Naive thymus-derived CD4-positive, alpha-beta T cell (primary cell): ENCODE measurements at regions of chr19 and their contacts with region 1.

Region 1: DNA sequence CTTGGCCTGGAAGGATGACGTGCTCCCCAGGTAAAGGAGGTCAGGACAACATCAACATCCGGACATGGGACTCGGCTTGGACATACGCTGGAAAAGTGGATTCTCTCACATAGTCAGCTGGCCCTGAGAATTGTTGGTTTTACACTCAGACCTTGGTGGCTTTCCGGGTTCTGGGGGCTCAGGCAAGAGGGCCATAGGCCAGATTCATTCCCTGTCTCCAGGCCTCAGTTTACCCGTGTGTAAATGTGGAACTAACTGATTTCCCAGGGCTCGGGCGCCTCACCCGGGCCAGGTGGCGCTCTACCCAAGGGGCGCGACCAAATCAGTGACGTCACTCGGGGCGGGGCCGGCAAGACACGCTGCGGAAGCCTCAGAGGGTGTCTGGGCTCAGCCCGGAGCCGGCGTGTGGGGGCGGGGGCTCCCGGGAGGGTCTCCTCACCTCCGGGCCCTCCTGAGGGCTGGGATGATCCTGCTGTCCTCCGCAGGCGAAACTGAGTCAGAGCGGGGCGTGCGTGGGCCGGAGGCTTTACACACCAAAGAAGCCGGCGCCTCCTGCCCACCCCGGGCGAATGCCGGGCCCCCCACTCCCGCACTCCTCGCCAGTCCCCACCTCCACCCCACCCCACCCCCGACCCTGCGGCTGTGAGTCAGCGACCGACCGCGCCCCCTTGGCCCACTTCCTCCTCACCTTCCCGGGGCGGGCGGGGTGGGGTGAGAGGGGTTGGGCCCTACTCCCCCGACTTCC is 861 bp upstream of the VASP start:
- DNase-seq: peak; percentile 95 to 99 (median 98)
- ATAC-seq: peak; percentile 88
- H3K4me3 ChIP-seq: peak overlapping the region; percentile 99
- H3K4me3 Mint-ChIP-seq: peak overlapping the region; percentile 91 to 96 (median 94)
- H3K27ac ChIP-seq: peak overlapping the region; percentile 87
- H3K27ac Mint-ChIP-seq: peak overlapping the region; percentile 91 to 98 (median 97)
- H3K4me1 ChIP-seq: peaks cover 14 to 20% of the 10 kb centered on the region in 2 donors
- H3K4me1 Mint-ChIP-seq: peaks cover 29 to 46% (median 34%) of the 10 kb centered on the region in 7 donors
- H3K27me3 ChIP-seq: no peaks in the 10 kb centered on the region
- H3K27me3 Mint-ChIP-seq: no peaks in the 10 kb centered on the region

Region 2: GRCh38 chr19:45439569-45440254 is 66.7 kb before region 1 on chr19:
- CTCF ChIA-PET with region 1: interaction called, 3 read pairs
- POLR2A ChIA-PET with region 1: interaction called, 6 read pairs
- intact Hi-C with region 1: loop called in 1 of 2 experiments (anchors 2 kb)
- DNase-seq: peak; percentile 75 to 95 (median 86)
- ATAC-seq: peak; percentile 72
- H3K4me3 ChIP-seq: peak overlapping the region; percentile 57
- H3K4me3 Mint-ChIP-seq: peak overlapping the region; percentile 68 to 83 (median 77)
- H3K27ac ChIP-seq: peak overlapping the region; percentile 69
- H3K27ac Mint-ChIP-seq: peak overlapping the region in 4 of 9 donors; percentile 51 to 91 (median 74)
- H3K4me1 ChIP-seq: peaks cover 24% of the 10 kb centered on the region in 2 donors
- H3K4me1 Mint-ChIP-seq: peaks cover 26 to 35% (median 33%) of the 10 kb centered on the region in 7 donors
- H3K27me3 ChIP-seq: no peaks in the 10 kb centered on the region
- H3K27me3 Mint-ChIP-seq: peaks cover 0 to 5% (median 0%) of the 10 kb centered on the region in 5 donors

Region 3: DNA sequence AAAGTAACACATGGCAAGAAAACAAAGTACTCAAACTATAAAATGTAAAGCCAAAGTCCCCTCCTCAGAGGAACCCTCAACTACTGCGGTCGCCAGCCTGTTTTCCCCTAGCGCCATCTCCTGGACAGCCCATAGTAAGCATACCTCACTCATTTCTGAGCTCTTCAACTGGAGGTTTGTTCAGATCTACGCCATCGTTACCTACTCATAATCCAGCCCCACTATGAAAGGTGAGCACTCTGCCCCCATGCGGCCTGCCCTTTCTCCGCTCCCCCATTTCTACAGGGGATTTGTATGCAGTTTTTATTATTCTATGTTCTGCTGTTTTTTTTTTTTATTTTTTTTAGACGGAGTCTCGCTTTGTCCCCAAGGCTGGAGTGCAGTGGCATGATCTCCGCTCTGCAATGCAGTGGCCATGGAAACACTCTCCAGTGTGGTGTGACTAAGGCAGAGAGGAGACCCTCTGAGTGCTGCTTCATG is 52.0 kb after region 1 on chr19:
- CTCF ChIA-PET with region 1: interaction called, 11 read pairs
- POLR2A ChIA-PET with region 1: no interaction called
- intact Hi-C with region 1: loop called in 1 of 2 experiments (anchors 1 kb)
- DNase-seq: peak; percentile 37 to 85 (median 81)
- ATAC-seq: peak; percentile 99
- H3K4me3 ChIP-seq: no peak overlapping the region
- H3K4me3 Mint-ChIP-seq: peak overlapping the region in 3 of 10 donors; percentile 52 to 75 (median 59)
- H3K27ac ChIP-seq: peak overlapping the region; percentile 18
- H3K27ac Mint-ChIP-seq: peak overlapping the region in 8 of 9 donors; percentile 14 to 86 (median 66)
- H3K4me1 ChIP-seq: peaks cover 0 to 29% of the 10 kb centered on the region in 2 donors
- H3K4me1 Mint-ChIP-seq: peaks cover 20 to 48% (median 34%) of the 10 kb centered on the region in 7 donors
- H3K27me3 ChIP-seq: no peaks in the 10 kb centered on the region
- H3K27me3 Mint-ChIP-seq: no peaks in the 10 kb centered on the region

Region 4: GRCh38 chr19:45569619-45570421 is 63.4 kb after region 1 on chr19:
- CTCF ChIA-PET with region 1: interaction called, 3 read pairs
- POLR2A ChIA-PET with region 1: no interaction called
- intact Hi-C with region 1: loop called in 1 of 2 experiments (anchors 1 kb)
- DNase-seq: peak in 8 of 9 donors; percentile 16 to 65 (median 45)
- ATAC-seq: peak; percentile 75
- H3K4me3 ChIP-seq: no peak overlapping the region
- H3K4me3 Mint-ChIP-seq: no peak overlapping the region
- H3K27ac ChIP-seq: no peak overlapping the region
- H3K27ac Mint-ChIP-seq: peak overlapping the region in 7 of 9 donors; percentile 18 to 89 (median 43)
- H3K4me1 ChIP-seq: peaks cover 0 to 1% of the 10 kb centered on the region in 2 donors
- H3K4me1 Mint-ChIP-seq: peaks cover 6 to 26% (median 10%) of the 10 kb centered on the region in 7 donors
- H3K27me3 ChIP-seq: no peaks in the 10 kb centered on the region
- H3K27me3 Mint-ChIP-seq: no peaks in the 10 kb centered on the region

Region 5: GRCh38 chr19:45615795-45616708 is 109.6 kb after region 1 on chr19:
- CTCF ChIA-PET with region 1: no interaction called
- POLR2A ChIA-PET with region 1: no interaction called
- intact Hi-C with region 1: no loop called
- DNase-seq: peak; percentile 37 to 81 (median 57)
- ATAC-seq: peak; percentile 95
- H3K4me3 ChIP-seq: no peak overlapping the region
- H3K4me3 Mint-ChIP-seq: no peak overlapping the region
- H3K27ac ChIP-seq: no peak overlapping the region
- H3K27ac Mint-ChIP-seq: peak overlapping the region in 4 of 9 donors; percentile 30 to 63 (median 42)
- H3K4me1 ChIP-seq: no peaks in the 10 kb centered on the region
- H3K4me1 Mint-ChIP-seq: peaks cover 0 to 19% (median 0%) of the 10 kb centered on the region in 7 donors
- H3K27me3 ChIP-seq: no peaks in the 10 kb centered on the region
- H3K27me3 Mint-ChIP-seq: no peaks in the 10 kb centered on the region

Region 6: DNA sequence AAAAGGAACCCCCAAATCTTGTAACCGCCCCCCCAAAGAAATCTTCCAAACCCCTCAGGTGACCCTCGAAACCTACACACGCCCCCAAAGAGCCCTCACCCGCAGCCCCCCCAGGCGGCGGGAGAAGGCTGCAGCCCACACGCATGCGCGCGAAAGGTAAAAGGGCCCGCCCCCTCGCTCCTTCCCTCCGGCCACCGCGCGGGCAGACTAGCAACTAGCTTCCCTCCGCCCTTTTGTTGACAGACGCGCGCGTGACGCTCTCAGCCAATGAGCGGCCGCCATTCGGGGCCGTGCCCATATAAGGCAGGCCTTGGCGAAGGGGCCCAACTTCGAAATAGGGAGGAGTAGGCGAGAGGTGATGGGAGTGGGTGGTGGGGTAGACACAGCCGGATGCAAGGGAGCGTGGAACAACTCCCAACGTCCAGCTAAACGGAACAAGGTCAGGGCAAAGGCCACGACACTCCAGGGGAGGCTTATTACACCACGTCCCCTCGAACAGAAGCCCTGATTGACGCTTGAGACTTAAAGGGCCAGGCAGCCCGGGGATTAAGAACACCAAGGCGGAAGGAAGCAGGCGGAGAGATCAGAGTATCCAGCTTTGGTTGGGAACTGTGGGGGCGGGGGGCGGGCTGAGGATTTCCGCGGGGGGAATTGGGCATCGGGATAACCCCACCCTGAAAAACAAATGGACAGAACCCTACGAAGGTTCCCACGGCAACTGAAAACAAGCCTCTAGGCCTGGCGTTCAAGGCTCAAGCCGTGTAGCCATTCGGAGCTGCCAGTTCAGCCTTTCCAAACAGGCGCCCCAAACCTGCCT is 211.0 kb after region 1 on chr19:
- CTCF ChIA-PET with region 1: no interaction called
- POLR2A ChIA-PET with region 1: no interaction called
- intact Hi-C with region 1: loop called in 1 of 2 experiments (anchors 1 kb)
- DNase-seq: peak; percentile 92 to 99 (median 98)
- ATAC-seq: peak; percentile 98
- H3K4me3 ChIP-seq: peak overlapping the region; percentile 80
- H3K4me3 Mint-ChIP-seq: peak overlapping the region; percentile 89 to 99 (median 95)
- H3K27ac ChIP-seq: peak overlapping the region; percentile 89
- H3K27ac Mint-ChIP-seq: peak overlapping the region; percentile 88 to 97 (median 96)
- H3K4me1 ChIP-seq: peaks cover 17 to 26% of the 10 kb centered on the region in 2 donors
- H3K4me1 Mint-ChIP-seq: peaks cover 26 to 55% (median 38%) of the 10 kb centered on the region in 7 donors
- H3K27me3 ChIP-seq: no peaks in the 10 kb centered on the region
- H3K27me3 Mint-ChIP-seq: no peaks in the 10 kb centered on the region

Region 7: GRCh38 chr19:45730389-45731288 is 224.2 kb after region 1 on chr19 and contains the start of gene FBXO46:
- CTCF ChIA-PET with region 1: no interaction called
- POLR2A ChIA-PET with region 1: no interaction called
- intact Hi-C with region 1: loop called in 1 of 2 experiments (anchors 2 kb)
- DNase-seq: peak; percentile 74 to 94 (median 90)
- ATAC-seq: peak; percentile 99
- H3K4me3 ChIP-seq: peak within 1 kb of the TSS; percentile 96
- H3K4me3 Mint-ChIP-seq: peak within 1 kb of the TSS; percentile 85 to 98 (median 92)
- H3K27ac ChIP-seq: peak within 1 kb of the TSS; percentile 92
- H3K27ac Mint-ChIP-seq: peak within 1 kb of the TSS; percentile 60 to 93 (median 91)
- H3K4me1 ChIP-seq: peaks cover 6 to 14% of the 10 kb centered on the region in 2 donors
- H3K4me1 Mint-ChIP-seq: peaks cover 27 to 41% (median 33%) of the 10 kb centered on the region in 7 donors
- H3K27me3 ChIP-seq: no peaks in the 10 kb centered on the region
- H3K27me3 Mint-ChIP-seq: peaks cover 0 to under 1% (median 0%) of the 10 kb centered on the region in 5 donors
- total RNA-seq, gene FBXO46: 21.2 to 52.9 (median 36.6) TPM